ENCODE measurements at regions of chr1 and their contacts with region 1.

Region 1: DNA sequence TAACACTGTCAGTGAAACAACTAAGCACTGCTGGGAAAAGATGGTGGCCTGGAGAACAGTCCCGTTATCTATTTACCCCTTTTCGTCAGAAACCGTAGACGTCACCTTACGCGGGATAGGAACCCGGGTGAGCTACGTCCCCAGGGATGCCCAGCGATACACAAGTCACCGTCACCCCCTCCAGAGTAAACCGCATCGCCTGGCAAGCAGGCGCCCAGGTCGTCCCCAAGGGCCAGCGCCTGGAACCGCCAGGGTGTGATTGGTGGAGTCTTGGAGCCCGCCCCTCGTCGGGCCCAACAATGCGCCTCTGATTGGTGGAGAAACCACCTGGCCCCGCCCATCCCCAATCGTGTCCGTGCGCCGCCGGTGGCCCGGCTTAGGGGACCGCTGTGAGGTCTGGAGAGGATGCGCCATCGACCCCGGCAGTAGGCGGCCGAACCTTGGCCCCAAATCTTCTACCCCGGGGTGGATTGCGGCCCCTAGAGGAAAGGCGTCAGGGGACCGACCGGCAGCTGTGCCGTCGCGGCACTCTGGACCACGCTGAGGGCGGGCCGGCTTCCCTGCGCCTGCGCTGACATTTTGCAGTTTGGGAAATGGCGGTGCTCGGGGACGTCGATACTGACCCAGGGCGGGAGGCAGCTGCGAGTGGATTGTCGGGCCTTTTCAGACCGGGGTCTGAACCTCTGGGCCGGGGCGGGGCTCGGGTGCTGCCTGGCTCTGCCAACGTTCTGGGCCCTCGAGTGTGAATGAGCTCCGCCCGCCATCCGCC is 34.4 kb downstream of the SLC2A1 start:
- H3K4me3 ChIP-seq: peak overlapping the region; percentile 63
- H3K27ac ChIP-seq: peak overlapping the region; percentile 72; the same call in 1 of the 2 replicates
- H3K4me1 ChIP-seq: peaks cover 5% of the 10 kb centered on the region; the same call in 1 of the 2 replicates
- CTCF ChIP-seq: peak; percentile 97

Region 2: GRCh38 chr1:42777852-42778251 is 146.4 kb before region 1 on chr1:
- CTCF ChIA-PET with region 1: interaction called, 10 read pairs
- POLR2A ChIA-PET with region 1: no interaction called
- H3K4me3 ChIP-seq: no peak overlapping the region
- H3K27ac ChIP-seq: no peak overlapping the region
- H3K4me1 ChIP-seq: no peaks in the 10 kb centered on the region
- CTCF ChIP-seq: peak; percentile 64

Region 3: DNA sequence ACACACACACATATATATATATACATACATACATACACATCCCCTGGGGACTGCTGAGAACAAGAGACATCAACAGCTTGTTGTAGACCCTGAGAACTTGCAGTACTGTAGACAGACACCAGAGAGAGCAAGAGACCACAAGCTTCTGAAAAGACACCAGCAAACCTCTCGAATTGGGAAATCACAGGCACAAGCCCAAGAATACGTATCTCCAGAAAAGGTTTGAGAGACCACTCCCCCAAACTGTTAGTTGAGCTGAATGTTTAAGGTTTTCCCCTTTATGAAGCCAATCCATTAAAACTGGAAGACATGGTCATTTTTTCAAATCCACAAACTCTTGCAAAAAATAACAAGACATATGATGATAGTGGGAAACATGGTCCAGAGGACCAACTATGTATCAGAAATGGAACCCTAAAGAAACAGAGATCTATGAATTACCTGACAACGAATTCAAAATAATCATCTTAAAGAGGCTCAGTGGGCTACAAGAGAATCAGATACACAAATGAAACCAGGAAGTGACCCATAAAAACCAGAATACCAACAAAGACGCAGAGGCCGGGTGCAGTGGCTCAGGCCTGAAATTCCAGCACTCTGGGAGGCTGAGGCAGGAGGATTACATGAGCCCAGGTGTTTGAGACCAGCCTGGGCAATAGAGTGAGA is 10.7 kb before region 1 on chr1:
- CTCF ChIA-PET with region 1: interaction called, 49 read pairs
- POLR2A ChIA-PET with region 1: interaction called, 3 read pairs
- H3K4me3 ChIP-seq: no peak overlapping the region
- H3K27ac ChIP-seq: no peak overlapping the region
- H3K4me1 ChIP-seq: no peaks in the 10 kb centered on the region
- CTCF ChIP-seq: peak; percentile 39; the same call in 1 of the 2 replicates